Activated CD4-positive, alpha-beta T cell treated with anti-CD3 and anti-CD28 coated beads, Interleukin-2, amount 10 ng/mL, durations not matched to agents 7 days and 5 days (primary cell): ENCODE measurements at regions of chr10 and their contacts with region 1.

Region 1: GRCh38 chr10:119199231-119199992 is 8.0 kb upstream of the GRK5 start:
- DNase-seq: peak; percentile 68
- H3K4me3 Mint-ChIP-seq: no peak overlapping the region
- H3K27ac Mint-ChIP-seq: no peak overlapping the region
- H3K4me1 Mint-ChIP-seq: peaks cover 11% of the 10 kb centered on the region
- H3K27me3 Mint-ChIP-seq: no peaks in the 10 kb centered on the region

Region 2: DNA sequence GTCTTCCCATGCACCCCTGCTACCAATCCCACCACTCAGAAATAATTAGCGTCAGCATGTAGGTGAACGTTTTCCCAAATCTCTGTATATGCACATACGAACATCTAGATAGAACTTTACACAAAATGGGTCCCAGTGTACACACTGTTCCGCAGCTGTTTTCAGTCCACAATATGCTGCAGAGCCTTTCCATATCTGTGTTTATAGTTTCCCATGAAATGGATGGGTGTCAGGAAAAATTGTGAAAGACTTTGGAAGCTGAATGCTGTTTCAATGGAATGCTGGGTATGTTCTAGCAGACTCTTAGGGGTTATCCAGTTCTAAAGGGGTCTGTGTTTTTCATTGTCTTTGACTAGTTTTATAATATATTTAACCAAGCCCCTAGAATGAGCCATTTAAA is 21.8 kb after region 1 on chr10:
- CTCF ChIA-PET with region 1: no interaction called
- POLR2A ChIA-PET with region 1: no interaction called
- DNase-seq: no peak
- H3K4me3 Mint-ChIP-seq: no peak overlapping the region
- H3K27ac Mint-ChIP-seq: no peak overlapping the region
- H3K4me1 Mint-ChIP-seq: peaks cover 8% of the 10 kb centered on the region
- H3K27me3 Mint-ChIP-seq: no peaks in the 10 kb centered on the region

Region 3: GRCh38 chr10:119445311-119445934 is 246.0 kb after region 1 on chr10:
- CTCF ChIA-PET with region 1: interaction called, 21 read pairs
- POLR2A ChIA-PET with region 1: no interaction called
- DNase-seq: peak; percentile 89
- H3K4me3 Mint-ChIP-seq: no peak overlapping the region
- H3K27ac Mint-ChIP-seq: no peak overlapping the region
- H3K4me1 Mint-ChIP-seq: peaks cover 14% of the 10 kb centered on the region
- H3K27me3 Mint-ChIP-seq: no peaks in the 10 kb centered on the region